ENCODE measurements at regions of chr14 and their contacts with region 1.

Region 1: DNA sequence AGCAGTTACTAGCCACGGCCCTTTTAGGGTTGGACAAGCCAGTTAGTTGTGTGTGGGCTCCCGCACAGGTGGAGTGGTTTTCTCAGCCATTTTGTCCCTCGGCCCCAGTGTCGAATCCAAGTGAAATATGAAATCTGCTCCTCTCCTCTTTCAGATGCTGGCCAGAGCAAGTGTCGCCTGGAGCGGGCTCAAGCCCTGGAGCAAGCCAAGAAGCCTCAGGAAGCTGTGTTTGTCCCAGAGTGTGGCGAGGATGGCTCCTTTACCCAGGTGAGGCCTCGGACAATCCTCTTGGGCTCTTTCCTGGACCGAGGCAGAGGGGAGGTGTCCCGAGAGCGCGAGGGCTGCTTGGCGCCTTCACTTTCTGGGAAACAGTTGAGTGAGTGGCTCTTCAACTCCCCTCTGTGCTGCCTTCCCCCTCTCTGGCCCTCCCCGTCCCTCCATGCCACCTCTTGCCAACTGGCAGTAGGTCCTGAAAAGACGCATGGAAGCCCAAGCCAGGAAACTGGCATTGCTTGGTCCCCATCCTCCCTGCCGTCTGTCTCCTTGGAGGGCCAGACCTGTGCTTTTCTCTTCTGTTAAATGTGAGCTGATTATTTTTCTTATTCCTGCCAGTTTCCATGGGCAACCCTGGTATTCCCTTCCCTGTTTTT is 74.2 kb downstream of the SMOC1 start:
- DNase-seq: no peak
- ATAC-seq: no peak
- H3K4me3 ChIP-seq: no peak overlapping the region
- H3K27ac ChIP-seq: no peak overlapping the region
- H3K4me1 ChIP-seq: no peaks in the 10 kb centered on the region
- H3K27me3 ChIP-seq: peaks cover 0 to 20% of the 10 kb centered on the region in 2 donors
- CTCF ChIP-seq: no peak

Region 2: GRCh38 chr14:70567791-70568190 is 614.4 kb after region 1 on chr14:
- intact Hi-C with region 1: loop called in 1 of 2 experiments (anchors 10 kb)
- DNase-seq: no peak
- ATAC-seq: peak; percentile 70
- H3K4me3 ChIP-seq: no peak overlapping the region
- H3K27ac ChIP-seq: no peak overlapping the region
- H3K4me1 ChIP-seq: no peaks in the 10 kb centered on the region
- H3K27me3 ChIP-seq: no peaks in the 10 kb centered on the region
- CTCF ChIP-seq: peak; percentile 11 to 19